Upper lobe of right lung (tissue), 1 donor: ENCODE measurements at regions of chr17 and their contacts with region 1.

Region 1: DNA sequence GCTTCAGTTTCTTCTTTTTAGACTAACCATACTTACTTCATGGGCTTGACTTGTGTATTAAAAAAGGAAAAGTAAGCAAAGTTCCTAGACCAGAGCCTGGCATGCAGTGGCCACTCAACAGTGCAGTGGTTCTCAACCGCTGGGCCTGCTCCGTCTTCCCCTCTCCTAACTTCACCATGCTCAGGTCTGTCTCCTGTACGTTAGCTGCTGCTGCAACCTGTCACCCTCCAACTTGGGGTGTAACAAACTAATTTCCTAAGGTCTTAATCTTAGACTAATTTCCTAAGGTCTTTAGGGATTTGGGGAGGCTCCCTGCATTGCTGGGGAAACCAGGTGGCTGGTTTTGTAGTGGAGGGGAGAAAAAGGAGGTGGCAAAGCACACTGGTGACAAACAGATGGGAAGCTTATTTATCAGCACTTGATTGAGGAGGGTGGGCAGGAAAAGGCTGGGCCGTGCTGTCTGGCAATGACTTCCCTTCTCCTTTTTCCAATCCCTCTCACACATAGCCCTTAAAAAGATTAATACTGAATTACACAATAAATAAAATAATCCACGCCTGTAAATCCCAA is 2.2 kb upstream of the ARL4D start:
- DNase-seq: no peak
- ATAC-seq: no peak
- H3K4me3 ChIP-seq: no peak overlapping the region
- H3K27ac ChIP-seq: no peak overlapping the region
- H3K4me1 ChIP-seq: peaks cover 29% of the 10 kb centered on the region
- H3K27me3 ChIP-seq: no peaks in the 10 kb centered on the region
- CTCF ChIP-seq: no peak

Region 2: GRCh38 chr17:43479948-43480347 is 83.4 kb after region 1 on chr17:
- intact Hi-C with region 1: loop called (anchors 2 kb)
- DNase-seq: no peak
- ATAC-seq: no peak
- H3K4me3 ChIP-seq: no peak overlapping the region
- H3K27ac ChIP-seq: no peak overlapping the region
- H3K4me1 ChIP-seq: peaks cover 11% of the 10 kb centered on the region
- H3K27me3 ChIP-seq: no peaks in the 10 kb centered on the region
- CTCF ChIP-seq: no peak